Panc1 (cell line): ENCODE measurements at regions of chr6 and their contacts with region 1.

Region 1: DNA sequence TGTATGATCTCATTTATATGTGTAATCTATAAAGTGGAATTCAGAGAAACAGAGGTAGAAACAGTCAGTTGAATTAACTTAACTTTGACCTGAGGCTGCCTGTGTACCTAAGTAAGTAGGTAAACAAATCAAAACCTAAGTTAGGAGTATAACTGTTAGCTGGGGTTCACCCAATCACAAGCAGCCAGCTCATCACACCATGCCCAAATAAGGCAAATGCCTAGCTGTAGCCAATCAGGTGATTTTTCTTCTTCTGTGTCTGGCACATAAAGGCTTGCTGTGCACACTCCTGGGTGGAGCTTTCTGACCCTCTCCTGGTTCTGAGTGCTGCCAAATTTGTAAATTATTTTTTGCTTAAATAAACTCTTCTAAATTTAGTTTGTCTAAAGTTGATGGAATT is 54.7 kb upstream of the TRIM39 start:
- DNase-seq: no peak
- ATAC-seq: no peak
- H3K4me3 ChIP-seq: no peak overlapping the region
- H3K27ac ChIP-seq: no peak overlapping the region
- H3K4me1 ChIP-seq: no peaks in the 10 kb centered on the region
- H3K27me3 ChIP-seq: no peaks in the 10 kb centered on the region
- CTCF ChIP-seq: no peak

Region 2: DNA sequence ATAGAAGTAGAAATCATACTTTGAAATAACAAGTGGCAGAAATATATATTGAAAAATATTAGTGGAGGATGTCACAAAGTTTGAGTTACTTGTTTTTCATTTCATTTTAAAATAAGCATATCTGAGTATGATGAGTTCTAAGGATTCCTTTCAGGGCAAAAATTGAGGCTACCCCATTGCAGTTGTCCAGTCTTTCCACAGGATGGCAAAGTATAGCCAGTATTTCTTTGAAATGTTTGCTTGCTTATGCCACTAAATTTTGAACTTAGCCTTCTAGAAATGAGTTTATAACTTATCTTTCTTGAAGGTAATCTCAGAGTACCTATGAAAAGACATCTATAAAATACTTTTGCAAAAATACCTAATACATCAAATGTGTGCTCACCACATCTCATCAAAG is 104.5 kb after region 1 on chr6:
- CTCF ChIA-PET with region 1: interaction called, 12 read pairs
- POLR2A ChIA-PET with region 1: no interaction called
- in situ Hi-C with region 1: no loop called
- intact Hi-C with region 1: no loop called
- DNase-seq: no peak
- ATAC-seq: no peak
- H3K4me3 ChIP-seq: no peak overlapping the region
- H3K27ac ChIP-seq: no peak overlapping the region
- H3K4me1 ChIP-seq: no peaks in the 10 kb centered on the region
- H3K27me3 ChIP-seq: peaks cover 15% of the 10 kb centered on the region
- CTCF ChIP-seq: peak; percentile 9; the same call in 1 of the 2 replicates